ENCODE measurements at regions of chr4 and their contacts with region 1.

Region 1: GRCh38 chr4:123755655-123756054 is 359.1 kb downstream of the SPRY1 start:
- DNase-seq: no peak
- H3K4me3 ChIP-seq: no peak overlapping the region
- H3K27ac ChIP-seq: no peak overlapping the region
- H3K4me1 ChIP-seq: no peaks in the 10 kb centered on the region
- H3K27me3 ChIP-seq: no peaks in the 10 kb centered on the region
- CTCF ChIP-seq: no peak
- POLR2A ChIP-seq: no peak

Region 2: GRCh38 chr4:123767806-123768205 is 12.2 kb after region 1 on chr4:
- CTCF ChIA-PET with region 1: interaction called, 14 read pairs
- POLR2A ChIA-PET with region 1: no interaction called
- dilution Hi-C with region 1: no loop called
- intact Hi-C with region 1: no loop called
- DNase-seq: no peak
- H3K4me3 ChIP-seq: no peak overlapping the region
- H3K27ac ChIP-seq: no peak overlapping the region
- H3K4me1 ChIP-seq: no peaks in the 10 kb centered on the region
- H3K27me3 ChIP-seq: no peaks in the 10 kb centered on the region
- CTCF ChIP-seq: no peak
- POLR2A ChIP-seq: no peak